Endothelial cell of umbilical vein (primary cell): ENCODE measurements at regions of chr5 and their contacts with region 1.

Region 1: DNA sequence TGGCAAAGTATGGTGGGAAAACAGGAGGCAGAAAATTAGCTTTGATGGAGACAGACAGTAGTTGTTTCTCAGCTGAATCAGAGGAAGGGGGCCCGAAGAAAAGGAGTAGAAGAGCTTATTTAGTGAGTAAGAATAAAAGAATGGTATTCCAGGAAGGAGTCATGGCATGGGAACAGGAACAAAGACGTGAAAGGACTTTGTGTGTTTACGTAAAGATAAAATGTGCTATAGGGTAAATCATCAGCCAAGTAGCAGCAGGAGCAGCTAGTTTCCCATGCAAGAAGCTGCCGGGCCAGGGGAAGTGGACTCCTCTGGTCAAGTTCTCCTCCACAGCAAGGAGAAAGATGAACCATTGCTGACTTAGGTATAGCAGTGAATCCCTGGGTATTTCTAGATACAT is 454.5 kb downstream of the HINT1 start:
- DNase-seq: peak; percentile 86
- H3K4me3 ChIP-seq: no peak overlapping the region
- H3K27ac ChIP-seq: peak overlapping the region; percentile 48
- H3K4me1 ChIP-seq: peaks cover 26% of the 10 kb centered on the region
- H3K27me3 ChIP-seq: no peaks in the 10 kb centered on the region
- CTCF ChIP-seq: no peak
- POLR2A ChIP-seq: no peak

Region 2: GRCh38 chr5:130549884-130550561 is 160.6 kb before region 1 on chr5:
- CTCF ChIA-PET with region 1: no interaction called
- POLR2A ChIA-PET with region 1: no interaction called
- dilution Hi-C with region 1: no loop called
- intact Hi-C with region 1: loop called (anchors 5 kb)
- DNase-seq: peak; percentile 73
- H3K4me3 ChIP-seq: no peak overlapping the region
- H3K27ac ChIP-seq: peak overlapping the region; percentile 63
- H3K4me1 ChIP-seq: peaks cover 12% of the 10 kb centered on the region
- H3K27me3 ChIP-seq: no peaks in the 10 kb centered on the region
- CTCF ChIP-seq: no peak
- POLR2A ChIP-seq: no peak

Region 3: GRCh38 chr5:130678637-130679036 is 32.0 kb before region 1 on chr5:
- CTCF ChIA-PET with region 1: no interaction called
- POLR2A ChIA-PET with region 1: no interaction called
- dilution Hi-C with region 1: no loop called
- intact Hi-C with region 1: no loop called
- DNase-seq: no peak
- H3K4me3 ChIP-seq: no peak overlapping the region
- H3K27ac ChIP-seq: no peak overlapping the region
- H3K4me1 ChIP-seq: no peaks in the 10 kb centered on the region
- H3K27me3 ChIP-seq: no peaks in the 10 kb centered on the region
- CTCF ChIP-seq: no peak
- POLR2A ChIP-seq: no peak